MCF 10A (cell line): ENCODE measurements at regions of chr1 and their contacts with region 1.

Region 1: GRCh38 chr1:197775282-197776262 is at the start of gene DENND1B:
- DNase-seq: peak; percentile 84
- H3K4me3 Mint-ChIP-seq: peak within 1 kb of the TSS; percentile 67
- H3K27ac Mint-ChIP-seq: peak within 1 kb of the TSS; percentile 72
- H3K4me1 Mint-ChIP-seq: peaks cover 45% of the 10 kb centered on the region
- H3K27me3 Mint-ChIP-seq: no peaks in the 10 kb centered on the region
- CTCF ChIP-seq: no peak
- total RNA-seq, gene DENND1B: 19.2 and 20.9 TPM in 2 replicates

Region 2: GRCh38 chr1:197761621-197762020 is 14.0 kb before region 1 on chr1:
- CTCF ChIA-PET with region 1: interaction called, 6 read pairs
- POLR2A ChIA-PET with region 1: interaction called, 35 read pairs
- intact Hi-C with region 1: no loop called
- DNase-seq: no peak
- H3K4me3 Mint-ChIP-seq: no peak overlapping the region
- H3K27ac Mint-ChIP-seq: no peak overlapping the region
- H3K4me1 Mint-ChIP-seq: peaks cover 6% of the 10 kb centered on the region
- H3K27me3 Mint-ChIP-seq: no peaks in the 10 kb centered on the region
- CTCF ChIP-seq: no peak

Region 3: GRCh38 chr1:198318085-198318484 is 542.5 kb after region 1 on chr1:
- CTCF ChIA-PET with region 1: no interaction called
- POLR2A ChIA-PET with region 1: no interaction called
- intact Hi-C with region 1: no loop called
- DNase-seq: no peak
- H3K4me3 Mint-ChIP-seq: no peak overlapping the region
- H3K27ac Mint-ChIP-seq: no peak overlapping the region
- H3K4me1 Mint-ChIP-seq: no peaks in the 10 kb centered on the region
- H3K27me3 Mint-ChIP-seq: no peaks in the 10 kb centered on the region
- CTCF ChIP-seq: no peak